ENCODE measurements at regions of chr1 and their contacts with region 1.

Region 1: DNA sequence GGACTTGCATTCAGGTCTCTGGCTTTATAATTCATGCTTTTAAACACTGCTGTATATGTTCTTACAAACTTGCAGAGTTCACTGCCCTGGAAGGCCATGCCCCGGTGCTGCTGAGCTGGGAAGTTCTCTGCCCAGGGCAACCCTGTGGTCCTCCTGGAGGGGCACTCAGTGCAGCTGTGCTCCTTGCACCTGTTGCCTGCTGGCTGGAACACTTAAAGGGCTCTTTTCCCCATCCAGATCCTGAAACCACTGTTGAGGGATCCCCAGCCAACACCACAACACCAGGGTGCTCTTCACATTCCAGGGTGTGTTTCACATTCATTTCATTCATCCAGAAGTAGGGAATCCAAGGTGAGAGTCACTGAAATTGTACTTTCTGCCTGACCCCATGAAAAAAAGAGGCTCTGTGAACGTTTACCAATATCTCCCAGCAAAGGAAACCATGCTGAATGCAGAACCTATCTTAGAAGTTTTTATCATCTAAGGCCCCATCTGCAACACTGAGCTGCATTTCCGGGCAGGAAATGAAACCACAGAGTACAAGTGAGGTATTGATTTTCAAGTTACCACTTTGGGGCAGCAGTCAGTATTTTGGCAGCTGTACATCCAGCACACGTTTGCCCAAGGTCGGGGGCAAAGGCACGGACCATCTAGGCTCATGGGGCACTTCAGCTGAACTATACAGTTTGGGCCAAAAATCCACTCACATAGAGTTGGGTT is 16.4 kb upstream of the KIAA0040 start:
- DNase-seq: peak; percentile 76
- H3K4me3 Mint-ChIP-seq: peak overlapping the region; percentile 71
- H3K27ac Mint-ChIP-seq: peak overlapping the region; percentile 99
- H3K4me1 Mint-ChIP-seq: peaks cover 71% of the 10 kb centered on the region
- H3K27me3 Mint-ChIP-seq: no peaks in the 10 kb centered on the region

Region 2: GRCh38 chr1:175192630-175193526 is 16.1 kb before region 1 on chr1 and contains the start of gene KIAA0040:
- CTCF ChIA-PET with region 1: interaction called, 22 read pairs
- DNase-seq: peak; percentile 69
- H3K4me3 Mint-ChIP-seq: peak within 1 kb of the TSS; percentile 93
- H3K27ac Mint-ChIP-seq: peak within 1 kb of the TSS; percentile 91
- H3K4me1 Mint-ChIP-seq: peaks cover 76% of the 10 kb centered on the region
- H3K27me3 Mint-ChIP-seq: no peaks in the 10 kb centered on the region

Region 3: GRCh38 chr1:175839678-175840669 is 631.0 kb after region 1 on chr1:
- CTCF ChIA-PET with region 1: no interaction called
- DNase-seq: no peak
- H3K4me3 Mint-ChIP-seq: no peak overlapping the region
- H3K27ac Mint-ChIP-seq: no peak overlapping the region
- H3K4me1 Mint-ChIP-seq: no peaks in the 10 kb centered on the region
- H3K27me3 Mint-ChIP-seq: peaks cover 3% of the 10 kb centered on the region

Measured in activated naive CD4-positive, alpha-beta T cell treated with anti-CD3 and anti-CD28 coated beads, Interleukin-2, amount 10 ng/mL, durations not matched to agents 7 days and 5 days (primary cell).